ENCODE measurements at regions of chr2 and their contacts with region 1.

Region 1: DNA sequence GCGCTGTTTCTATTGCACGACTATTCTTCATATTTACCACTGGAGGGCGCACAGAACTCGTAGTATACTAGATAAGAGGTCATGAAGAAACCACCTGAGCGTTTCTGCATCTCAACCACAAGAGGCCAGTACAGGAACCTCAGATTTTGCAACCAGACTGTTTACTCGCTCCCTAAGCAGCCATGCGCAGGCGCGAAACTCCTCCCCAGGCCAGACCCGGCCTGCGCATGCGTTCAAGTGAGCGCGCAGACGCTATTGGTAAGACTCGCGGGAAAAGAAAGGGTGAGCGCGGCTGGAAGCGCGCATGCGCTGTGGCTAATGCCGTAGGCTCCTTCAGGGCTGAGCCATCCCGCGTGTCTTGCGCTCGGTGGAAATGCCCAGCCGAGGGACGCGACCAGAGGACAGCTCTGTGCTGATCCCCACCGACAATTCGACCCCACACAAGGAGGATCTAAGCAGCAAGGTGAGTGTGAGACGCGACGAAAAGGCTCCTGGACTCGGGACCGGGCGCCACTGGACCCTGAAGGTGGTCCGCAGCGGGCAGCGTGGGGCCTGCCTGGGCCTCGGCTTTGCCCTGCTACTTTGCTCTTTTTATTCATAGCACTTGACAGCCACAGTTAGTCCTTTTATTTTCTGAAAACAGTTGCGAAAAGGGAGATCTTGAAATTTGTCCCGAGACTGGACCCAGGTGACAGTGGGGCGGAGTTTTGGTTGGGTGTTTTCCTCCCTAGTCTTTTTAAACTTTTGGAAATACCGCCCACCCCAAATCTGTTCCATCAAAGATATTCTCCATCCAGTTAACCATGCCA is at the start of gene ASNSD1:
- DNase-seq: peak; percentile 98
- H3K4me3 Mint-ChIP-seq: no peak within 1 kb of the TSS
- H3K27ac Mint-ChIP-seq: no peak within 1 kb of the TSS
- H3K4me1 Mint-ChIP-seq: peaks cover 52% of the 10 kb centered on the region
- H3K27me3 Mint-ChIP-seq: no peaks in the 10 kb centered on the region
- total RNA-seq, gene ASNSD1: 35.4 to 38.2 TPM

Region 2: DNA sequence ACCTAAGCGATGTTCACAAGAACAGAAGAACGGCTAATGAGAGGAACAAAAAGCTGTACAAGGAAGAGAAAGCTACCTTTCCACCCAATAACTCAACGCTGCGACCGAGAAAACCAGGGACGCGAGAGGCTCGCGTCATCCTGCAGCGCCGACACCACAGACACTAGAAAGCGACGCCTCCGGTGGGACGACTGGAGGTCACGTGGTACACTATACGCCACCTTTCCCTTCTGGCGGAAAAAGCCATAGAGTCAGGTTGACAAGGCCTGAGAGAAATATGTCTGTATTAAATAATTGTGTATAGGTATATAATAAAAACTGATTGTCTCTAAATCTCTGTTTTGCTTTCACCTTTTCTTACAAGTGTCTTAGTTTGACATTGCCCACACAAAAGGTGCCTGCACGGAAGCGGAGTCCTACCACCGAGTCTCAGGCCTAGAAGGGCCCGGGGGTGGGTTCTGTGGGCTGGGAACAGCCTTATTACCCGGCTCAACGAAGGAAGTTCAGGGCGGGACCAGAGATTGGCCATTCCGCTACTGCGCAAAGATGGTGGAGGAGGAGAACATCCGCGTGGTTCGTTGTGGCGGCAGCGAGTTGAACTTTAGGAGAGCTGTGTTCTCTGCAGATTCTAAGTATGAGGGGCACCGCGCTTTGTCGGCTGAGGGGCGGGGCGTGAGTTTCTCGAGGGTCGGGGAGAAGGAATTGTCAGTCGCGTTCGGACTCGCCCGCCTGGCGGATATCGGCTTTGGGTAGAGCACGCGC is 220.2 kb before region 1 on chr2 and contains the start of gene WDR75:
- CTCF ChIA-PET with region 1: interaction called, 4 read pairs
- intact Hi-C with region 1: loop called (anchors 1 kb)
- DNase-seq: peak; percentile 95
- H3K4me3 Mint-ChIP-seq: no peak within 1 kb of the TSS
- H3K27ac Mint-ChIP-seq: peak within 1 kb of the TSS; percentile 97
- H3K4me1 Mint-ChIP-seq: peaks cover 12% of the 10 kb centered on the region
- H3K27me3 Mint-ChIP-seq: no peaks in the 10 kb centered on the region
- total RNA-seq, gene WDR75: 69.7 to 72.7 TPM

Region 3: DNA sequence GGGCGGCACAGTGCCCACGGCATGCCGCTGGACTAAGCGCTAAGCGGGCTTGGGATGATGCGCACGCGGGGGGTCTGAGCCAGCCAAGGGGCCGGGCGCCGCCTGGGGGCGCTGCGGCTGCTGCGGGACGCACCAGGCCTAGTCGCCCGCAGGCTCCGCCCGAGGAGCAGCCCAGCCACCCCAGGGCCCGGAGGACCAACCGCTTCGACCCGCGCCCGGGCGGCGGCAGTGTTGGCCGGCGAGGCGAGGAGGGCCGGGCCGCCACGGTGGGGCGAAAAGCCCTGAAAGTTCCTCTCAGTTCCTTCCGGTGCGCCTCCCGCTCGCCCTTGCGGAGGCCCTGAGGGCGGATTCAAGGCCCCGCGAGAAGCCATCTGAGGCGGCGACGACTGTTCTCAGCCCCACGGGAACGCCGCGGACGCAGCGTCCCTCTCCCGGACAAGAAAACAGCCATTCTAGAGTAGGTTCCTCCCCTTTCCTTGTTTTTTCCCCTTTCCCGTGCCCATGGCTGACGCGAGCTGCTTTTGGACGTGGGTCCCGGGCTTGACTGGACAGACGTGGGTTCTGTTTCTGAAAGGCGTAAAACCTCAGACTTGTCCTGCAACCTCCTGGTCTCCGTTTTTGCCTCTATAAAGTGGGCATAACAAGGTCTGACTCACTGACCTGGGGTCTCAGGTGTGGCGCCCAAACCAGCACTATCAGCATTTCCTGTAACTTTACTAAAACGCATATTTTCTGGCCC is 13.2 kb after region 1 on chr2 and contains the start of gene ANKAR:
- CTCF ChIA-PET with region 1: interaction called, 87 read pairs
- intact Hi-C with region 1: loop called (anchors 1 kb)
- DNase-seq: peak; percentile 78
- H3K4me3 Mint-ChIP-seq: peak within 1 kb of the TSS; percentile 89
- H3K27ac Mint-ChIP-seq: peak within 1 kb of the TSS; percentile 94
- H3K4me1 Mint-ChIP-seq: peaks cover 35% of the 10 kb centered on the region
- H3K27me3 Mint-ChIP-seq: no peaks in the 10 kb centered on the region
- total RNA-seq, gene ANKAR: 1.6 to 2.5 TPM

Region 4: GRCh38 chr2:189762551-189763298 is 101.4 kb after region 1 on chr2 and contains the start of gene OSGEPL1:
- CTCF ChIA-PET with region 1: interaction called, 65 read pairs
- intact Hi-C with region 1: loop called (anchors 1 kb)
- DNase-seq: peak; percentile 95
- H3K4me3 Mint-ChIP-seq: peak within 1 kb of the TSS; percentile 92
- H3K27ac Mint-ChIP-seq: peak within 1 kb of the TSS; percentile 97
- H3K4me1 Mint-ChIP-seq: peaks cover 13% of the 10 kb centered on the region
- H3K27me3 Mint-ChIP-seq: no peaks in the 10 kb centered on the region
- total RNA-seq, gene OSGEPL1: 15.5 to 15.8 TPM

Region 5: GRCh38 chr2:190017837-190018236 is 356.5 kb after region 1 on chr2:
- CTCF ChIA-PET with region 1: no interaction called
- intact Hi-C with region 1: no loop called
- DNase-seq: no peak
- H3K4me3 Mint-ChIP-seq: no peak overlapping the region
- H3K27ac Mint-ChIP-seq: no peak overlapping the region
- H3K4me1 Mint-ChIP-seq: no peaks in the 10 kb centered on the region
- H3K27me3 Mint-ChIP-seq: peaks cover 15% of the 10 kb centered on the region

Region 6: GRCh38 chr2:190277234-190278112 is 616.1 kb after region 1 on chr2:
- CTCF ChIA-PET with region 1: no interaction called
- intact Hi-C with region 1: loop called (anchors 1 kb)
- DNase-seq: peak; percentile 51
- H3K4me3 Mint-ChIP-seq: no peak overlapping the region
- H3K27ac Mint-ChIP-seq: no peak overlapping the region
- H3K4me1 Mint-ChIP-seq: peaks cover 2% of the 10 kb centered on the region
- H3K27me3 Mint-ChIP-seq: no peaks in the 10 kb centered on the region

Region 7: DNA sequence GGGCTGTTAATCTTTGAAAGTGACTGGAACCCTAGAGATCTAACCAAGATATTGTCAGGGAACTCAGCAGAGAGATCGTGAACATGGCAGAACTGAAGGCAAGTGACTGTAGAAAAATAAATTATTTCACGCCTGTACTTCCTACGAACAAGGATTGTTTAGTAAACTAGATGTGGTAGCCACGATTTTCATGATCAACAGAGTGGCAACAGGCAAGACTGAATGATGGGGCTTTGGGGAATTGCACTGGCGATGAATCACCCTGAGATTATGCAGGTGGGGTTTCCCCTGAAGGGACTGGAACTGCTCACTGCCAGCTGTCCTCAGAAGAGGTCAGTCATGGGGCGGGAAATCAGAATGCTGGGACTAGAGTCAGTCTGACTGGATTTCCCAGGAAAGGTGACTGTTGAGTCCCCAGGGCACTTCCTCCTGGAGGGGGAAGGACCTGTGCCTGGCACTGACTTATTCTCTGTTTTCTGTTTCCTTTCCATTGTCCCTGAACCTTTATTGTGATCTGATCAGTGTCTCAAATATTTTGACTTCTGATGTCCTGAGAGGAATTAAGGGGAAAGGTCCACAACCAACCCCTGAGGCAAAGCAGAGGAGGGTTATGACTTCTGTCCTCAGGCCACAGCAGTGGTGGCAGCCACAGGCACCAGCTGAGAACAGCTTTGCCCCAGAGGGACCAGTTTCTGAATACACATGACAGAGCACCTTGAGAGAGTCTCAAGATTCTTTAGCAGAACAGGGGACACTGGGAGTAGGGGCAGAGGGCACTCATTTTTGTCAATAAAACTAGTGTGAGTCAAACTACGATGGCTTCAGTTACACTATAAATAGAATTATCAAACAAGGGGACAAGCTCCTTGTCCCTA is 1057.5 kb after region 1 on chr2:
- CTCF ChIA-PET with region 1: no interaction called
- intact Hi-C with region 1: loop called (anchors 5 kb)
- DNase-seq: peak; percentile 93
- H3K4me3 Mint-ChIP-seq: peak overlapping the region; percentile 0
- H3K27ac Mint-ChIP-seq: peak overlapping the region; percentile 60
- H3K4me1 Mint-ChIP-seq: peaks cover 65% of the 10 kb centered on the region
- H3K27me3 Mint-ChIP-seq: no peaks in the 10 kb centered on the region

Measured in activated naive CD4-positive, alpha-beta T cell treated with anti-CD3 and anti-CD28 coated beads for 36 hours (primary cell).